ENCODE measurements at regions of chr9 and their contacts with region 1.

Region 1: GRCh38 chr9:122453677-122454135 is 24.0 kb downstream of the OR1J1 start:
- DNase-seq: no peak
- H3K4me3 ChIP-seq: no peak overlapping the region
- H3K27ac ChIP-seq: no peak overlapping the region
- H3K4me1 ChIP-seq: no peaks in the 10 kb centered on the region
- CTCF ChIP-seq: no peak

Region 2: GRCh38 chr9:121861501-121862180 is 592.1 kb before region 1 on chr9:
- CTCF ChIA-PET with region 1: no interaction called
- POLR2A ChIA-PET with region 1: no interaction called
- intact Hi-C with region 1: no loop called
- DNase-seq: peak; percentile 45
- H3K4me3 ChIP-seq: no peak overlapping the region
- H3K27ac ChIP-seq: no peak overlapping the region
- H3K4me1 ChIP-seq: peaks cover 13% of the 10 kb centered on the region
- CTCF ChIP-seq: peak; percentile 65

Region 3: GRCh38 chr9:121972501-121972981 is 481.2 kb before region 1 on chr9:
- CTCF ChIA-PET with region 1: no interaction called
- POLR2A ChIA-PET with region 1: no interaction called
- intact Hi-C with region 1: no loop called
- DNase-seq: peak; percentile 95
- H3K4me3 ChIP-seq: peak overlapping the region; percentile 61
- H3K27ac ChIP-seq: peak overlapping the region; percentile 96
- H3K4me1 ChIP-seq: peaks cover 72% of the 10 kb centered on the region
- CTCF ChIP-seq: no peak

Region 4: GRCh38 chr9:122125158-122125508 is 328.6 kb before region 1 on chr9:
- CTCF ChIA-PET with region 1: no interaction called
- POLR2A ChIA-PET with region 1: no interaction called
- intact Hi-C with region 1: loop called (anchors 5 kb)
- DNase-seq: peak; percentile 74
- H3K4me3 ChIP-seq: no peak overlapping the region
- H3K27ac ChIP-seq: no peak overlapping the region
- H3K4me1 ChIP-seq: peaks cover 5% of the 10 kb centered on the region
- CTCF ChIP-seq: peak; percentile 92

Region 5: DNA sequence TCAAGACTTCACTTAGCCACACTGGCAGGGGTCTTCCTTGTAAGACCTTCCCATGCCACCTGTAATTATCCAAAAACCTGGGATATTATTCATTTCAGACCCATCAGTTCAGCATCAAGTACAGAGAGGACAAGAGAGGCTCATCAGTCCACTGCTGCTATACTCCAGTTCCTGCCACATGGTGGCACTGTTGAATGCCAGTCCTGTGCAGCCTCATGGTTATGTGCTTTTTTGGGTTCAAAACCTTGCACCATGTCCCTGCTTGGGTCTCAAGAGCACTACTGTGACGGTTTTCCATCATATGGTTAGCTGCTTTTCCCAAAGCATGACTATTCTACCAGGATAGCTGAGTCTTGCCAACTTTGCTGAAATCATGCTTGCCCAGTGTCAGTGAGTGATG is 74.4 kb before region 1 on chr9:
- CTCF ChIA-PET with region 1: interaction called, 7 read pairs
- POLR2A ChIA-PET with region 1: no interaction called
- intact Hi-C with region 1: loop called (anchors 1 kb)
- DNase-seq: peak; percentile 43
- H3K4me3 ChIP-seq: no peak overlapping the region
- H3K27ac ChIP-seq: no peak overlapping the region
- H3K4me1 ChIP-seq: no peaks in the 10 kb centered on the region
- CTCF ChIP-seq: peak; percentile 88